ENCODE measurements at regions of chr4 and their contacts with region 1.

Region 1: GRCh38 chr4:184825896-184826690 is at the start of gene ACSL1:
- DNase-seq: peak; percentile 76
- H3K4me3 Mint-ChIP-seq: peak within 1 kb of the TSS; percentile 84
- H3K27ac Mint-ChIP-seq: peak within 1 kb of the TSS; percentile 57
- H3K4me1 Mint-ChIP-seq: peaks cover 31% of the 10 kb centered on the region
- H3K27me3 Mint-ChIP-seq: no peaks in the 10 kb centered on the region
- total RNA-seq, gene ACSL1: 29.8 to 31.9 TPM

Region 2: GRCh38 chr4:183659029-183659871 is 1166.8 kb before region 1 on chr4 and contains the starts of genes RWDD4 and TRAPPC11:
- CTCF ChIA-PET with region 1: no interaction called
- intact Hi-C with region 1: loop called (anchors 10 kb)
- DNase-seq: peak; percentile 98
- H3K4me3 Mint-ChIP-seq: peak within 1 kb of the TSS; percentile 96
- H3K27ac Mint-ChIP-seq: peak within 1 kb of the TSS; percentile 68
- H3K4me1 Mint-ChIP-seq: peaks cover 32% of the 10 kb centered on the region
- H3K27me3 Mint-ChIP-seq: no peaks in the 10 kb centered on the region
- total RNA-seq, gene RWDD4: 17.8 to 20.8 TPM
- total RNA-seq, gene TRAPPC11: 25.0 to 32.6 TPM

Region 3: GRCh38 chr4:184733654-184734524 is 92.2 kb before region 1 on chr4 and contains the start of gene CENPU:
- CTCF ChIA-PET with region 1: no interaction called
- intact Hi-C with region 1: loop called (anchors 1 kb)
- DNase-seq: peak; percentile 97
- H3K4me3 Mint-ChIP-seq: peak within 1 kb of the TSS; percentile 97
- H3K27ac Mint-ChIP-seq: peak within 1 kb of the TSS; percentile 86
- H3K4me1 Mint-ChIP-seq: peaks cover 19% of the 10 kb centered on the region
- H3K27me3 Mint-ChIP-seq: no peaks in the 10 kb centered on the region
- total RNA-seq, gene CENPU: 78.7 to 91.5 TPM

Region 4: GRCh38 chr4:184792950-184793555 is 33.0 kb before region 1 on chr4:
- CTCF ChIA-PET with region 1: no interaction called
- intact Hi-C with region 1: loop called (anchors 1 kb)
- DNase-seq: peak; percentile 60
- H3K4me3 Mint-ChIP-seq: no peak overlapping the region
- H3K27ac Mint-ChIP-seq: no peak overlapping the region
- H3K4me1 Mint-ChIP-seq: peaks cover 22% of the 10 kb centered on the region
- H3K27me3 Mint-ChIP-seq: peaks cover 2% of the 10 kb centered on the region

Region 5: GRCh38 chr4:184805462-184806228 is 20.4 kb before region 1 on chr4:
- CTCF ChIA-PET with region 1: no interaction called
- intact Hi-C with region 1: no loop called
- DNase-seq: no peak
- H3K4me3 Mint-ChIP-seq: no peak overlapping the region
- H3K27ac Mint-ChIP-seq: no peak overlapping the region
- H3K4me1 Mint-ChIP-seq: peaks cover 2% of the 10 kb centered on the region
- H3K27me3 Mint-ChIP-seq: no peaks in the 10 kb centered on the region

Region 6: GRCh38 chr4:185142912-185143595 is 317.0 kb after region 1 on chr4 and contains the start of gene SLC25A4:
- CTCF ChIA-PET with region 1: no interaction called
- intact Hi-C with region 1: loop called (anchors 2 kb)
- DNase-seq: peak; percentile 87
- H3K4me3 Mint-ChIP-seq: peak within 1 kb of the TSS; percentile 83
- H3K27ac Mint-ChIP-seq: no peak within 1 kb of the TSS
- H3K4me1 Mint-ChIP-seq: peaks cover 13% of the 10 kb centered on the region
- H3K27me3 Mint-ChIP-seq: peaks cover 11% of the 10 kb centered on the region
- total RNA-seq, gene SLC25A4: 4.3 to 5.0 TPM